BJ (cell line): ENCODE measurements at regions of chr5 and their contacts with region 1.

Region 1: GRCh38 chr5:170434966-170435605 is 45.9 kb upstream of the KCNMB1 start:
- DNase-seq: no peak
- H3K4me3 ChIP-seq: no peak overlapping the region
- H3K27me3 ChIP-seq: peaks cover 6% of the 10 kb centered on the region; the same call in 1 of the 2 replicates
- CTCF ChIP-seq: peak; percentile 98

Region 2: DNA sequence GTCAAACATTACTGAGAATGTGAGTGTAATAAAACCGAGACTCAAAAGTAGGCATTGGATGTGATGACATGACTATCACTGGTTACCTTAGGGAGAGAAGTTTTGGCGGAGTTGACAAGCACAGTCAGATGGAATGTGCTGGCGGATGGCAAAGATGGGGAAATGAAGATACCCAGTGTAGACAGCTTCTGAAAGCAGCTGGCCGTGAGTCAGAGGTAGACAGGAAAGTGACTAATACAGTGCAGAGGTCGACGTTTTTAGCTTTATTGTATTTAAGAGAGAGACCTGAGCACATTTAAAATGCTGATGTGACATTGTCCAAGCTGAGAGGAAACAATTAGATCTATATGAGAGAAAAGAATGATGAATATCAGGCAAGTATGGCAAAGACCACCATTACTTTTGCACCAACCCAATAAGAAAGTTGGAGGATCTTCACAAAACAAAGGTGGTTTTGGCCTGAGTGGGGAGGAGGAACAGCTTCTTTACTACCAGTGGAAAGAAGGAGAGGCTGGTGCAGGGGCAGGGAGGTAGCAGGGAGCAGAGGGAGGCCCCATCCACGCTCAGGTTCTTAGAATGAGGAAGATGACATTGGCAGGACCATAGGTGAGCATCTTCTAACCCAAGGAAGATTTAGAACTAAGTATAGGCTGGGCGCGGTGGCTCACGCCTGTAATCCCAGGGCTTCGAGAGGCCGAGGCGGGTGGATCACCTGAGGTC is 32.1 kb after region 1 on chr5:
- CTCF ChIA-PET with region 1: no interaction called
- POLR2A ChIA-PET with region 1: no interaction called
- DNase-seq: peak; percentile 39
- H3K4me3 ChIP-seq: no peak overlapping the region
- H3K27me3 ChIP-seq: peaks cover 3% of the 10 kb centered on the region; the same call in 1 of the 2 replicates
- CTCF ChIP-seq: no peak

Region 3: DNA sequence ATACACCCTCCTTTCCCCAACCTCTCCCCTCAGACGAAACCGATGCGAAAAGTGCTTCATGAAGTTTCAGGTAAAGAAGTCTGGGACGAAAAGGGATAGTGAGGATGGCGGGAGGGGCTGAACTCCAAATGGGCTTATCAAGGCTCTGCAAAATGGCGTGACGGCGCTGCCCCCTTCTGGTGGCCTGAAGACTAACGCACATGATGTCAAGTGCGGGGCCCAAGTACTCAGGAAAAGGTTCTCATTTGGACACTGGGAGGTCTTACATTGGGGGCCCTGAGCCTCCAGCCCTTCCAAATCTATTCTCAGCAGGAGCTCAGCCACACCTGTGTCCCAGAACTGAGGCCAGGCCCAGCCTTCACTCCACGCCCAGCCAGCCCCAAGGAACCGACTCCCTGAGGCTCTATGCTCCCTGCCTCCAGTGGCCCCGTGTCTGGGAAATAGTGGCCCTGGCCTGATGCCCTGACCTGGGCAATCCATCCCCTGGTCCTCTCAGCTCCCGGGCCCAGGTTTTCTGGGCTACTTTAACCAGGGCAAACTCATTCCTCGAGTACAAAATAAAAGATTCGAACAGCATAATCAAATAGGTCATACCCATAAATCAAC is 188.6 kb after region 1 on chr5:
- CTCF ChIA-PET with region 1: interaction called, 115 read pairs
- POLR2A ChIA-PET with region 1: no interaction called
- DNase-seq: no peak
- H3K4me3 ChIP-seq: no peak overlapping the region
- H3K27me3 ChIP-seq: no peaks in the 10 kb centered on the region
- CTCF ChIP-seq: peak; percentile 71

Region 4: GRCh38 chr5:170633235-170634081 is 198.4 kb after region 1 on chr5:
- CTCF ChIA-PET with region 1: interaction called, 115 read pairs
- POLR2A ChIA-PET with region 1: no interaction called
- DNase-seq: peak; percentile 24
- H3K4me3 ChIP-seq: peak overlapping the region; percentile 25
- H3K27me3 ChIP-seq: peaks cover 3% of the 10 kb centered on the region
- CTCF ChIP-seq: no peak

Region 5: GRCh38 chr5:170638454-170639220 is 203.6 kb after region 1 on chr5:
- CTCF ChIA-PET with region 1: interaction called, 91 read pairs
- POLR2A ChIA-PET with region 1: no interaction called
- DNase-seq: no peak
- H3K4me3 ChIP-seq: no peak overlapping the region
- H3K27me3 ChIP-seq: peaks cover 5% of the 10 kb centered on the region; the same call in 1 of the 2 replicates
- CTCF ChIP-seq: peak; percentile 85

Region 6: GRCh38 chr5:170704417-170705192 is 269.5 kb after region 1 on chr5:
- CTCF ChIA-PET with region 1: no interaction called
- POLR2A ChIA-PET with region 1: no interaction called
- DNase-seq: no peak
- H3K4me3 ChIP-seq: no peak overlapping the region
- H3K27me3 ChIP-seq: 0 out of 2 replicates have a peak, but pooled peaks cover 1% of the 10 kb centered on the region
- CTCF ChIP-seq: no peak